ENCODE measurements at regions of chr3 and their contacts with region 1.

Region 1: GRCh38 chr3:32177702-32178198 is 60.7 kb upstream of the CMTM8 start:
- DNase-seq: peak; percentile 79
- H3K4me3 ChIP-seq: no peak overlapping the region
- H3K27ac ChIP-seq: no peak overlapping the region
- H3K4me1 ChIP-seq: peaks cover 7% of the 10 kb centered on the region
- H3K27me3 ChIP-seq: no peaks in the 10 kb centered on the region
- CTCF ChIP-seq: peak; percentile 99 to 100

Region 2: DNA sequence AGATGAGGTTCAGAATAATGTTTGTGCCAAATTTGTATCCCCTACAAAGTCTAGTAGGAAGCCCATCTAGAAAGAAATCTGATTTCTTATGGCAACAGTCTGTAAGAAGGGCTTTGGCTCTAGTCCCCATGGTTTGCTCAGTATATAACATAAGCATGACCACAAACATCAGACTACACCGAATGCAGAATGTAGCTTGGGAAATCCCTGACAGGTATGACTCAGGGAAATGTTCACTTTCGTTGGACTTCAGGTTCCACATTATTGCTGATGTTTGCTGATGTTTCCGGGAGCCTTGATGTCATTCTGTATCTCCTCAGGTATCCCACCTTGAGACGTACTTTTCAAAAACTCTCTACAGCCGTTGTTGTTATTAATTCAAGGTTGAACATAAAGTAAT is 1875.7 kb before region 1 on chr3:
- CTCF ChIA-PET with region 1: no interaction called
- dilution Hi-C with region 1: no loop called
- in situ Hi-C with region 1: no loop called
- intact Hi-C with region 1: no loop called
- DNase-seq: peak; percentile 88
- H3K4me3 ChIP-seq: no peak overlapping the region
- H3K27ac ChIP-seq: peak overlapping the region; percentile 19
- H3K4me1 ChIP-seq: peaks cover 11% of the 10 kb centered on the region
- H3K27me3 ChIP-seq: no peaks in the 10 kb centered on the region
- CTCF ChIP-seq: no peak

Region 3: DNA sequence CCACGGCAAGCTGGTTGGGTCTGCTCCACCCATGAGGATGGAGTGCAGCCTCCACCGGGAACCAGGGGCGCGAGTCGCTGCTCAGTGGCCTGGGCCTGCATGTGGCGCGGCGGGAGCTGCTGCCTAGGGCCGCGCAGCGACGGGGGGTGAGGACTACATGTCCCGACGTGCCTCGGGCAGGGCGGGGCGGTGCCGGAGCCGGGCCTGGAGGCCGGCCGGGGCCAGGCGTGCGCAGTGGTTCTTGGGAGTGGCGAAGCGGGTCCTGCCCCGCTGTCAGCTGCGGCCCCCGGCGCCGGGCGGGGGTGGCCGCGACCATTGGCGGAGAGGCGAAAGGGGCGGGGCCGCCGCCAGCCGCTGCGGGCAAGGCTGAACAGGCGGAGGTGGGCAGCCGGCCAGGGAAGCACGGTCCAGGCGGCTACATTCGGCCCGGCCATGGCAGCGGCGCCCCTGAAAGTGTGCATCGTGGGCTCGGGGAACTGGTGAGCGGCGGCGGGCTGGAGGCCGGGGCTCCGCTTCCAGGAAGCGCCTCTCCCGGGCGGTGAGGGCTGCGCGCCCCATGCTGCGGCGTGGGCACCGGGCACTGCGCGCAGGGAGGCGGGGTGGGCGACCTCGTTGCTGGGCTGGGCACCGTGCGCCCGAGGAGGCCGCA is 71.3 kb before region 1 on chr3 and contains the start of gene GPD1L:
- CTCF ChIA-PET with region 1: no interaction called
- dilution Hi-C with region 1: loop called (anchors 10 kb)
- in situ Hi-C with region 1: no loop called
- intact Hi-C with region 1: no loop called
- DNase-seq: peak; percentile 94
- H3K4me3 ChIP-seq: peak within 1 kb of the TSS; percentile 53 to 90 (median 62)
- H3K27ac ChIP-seq: no peak within 1 kb of the TSS
- H3K4me1 ChIP-seq: peaks cover 16% of the 10 kb centered on the region
- H3K27me3 ChIP-seq: no peaks in the 10 kb centered on the region
- CTCF ChIP-seq: no peak
- total RNA-seq, gene GPD1L: 5.7 to 7.5 TPM

Region 4: DNA sequence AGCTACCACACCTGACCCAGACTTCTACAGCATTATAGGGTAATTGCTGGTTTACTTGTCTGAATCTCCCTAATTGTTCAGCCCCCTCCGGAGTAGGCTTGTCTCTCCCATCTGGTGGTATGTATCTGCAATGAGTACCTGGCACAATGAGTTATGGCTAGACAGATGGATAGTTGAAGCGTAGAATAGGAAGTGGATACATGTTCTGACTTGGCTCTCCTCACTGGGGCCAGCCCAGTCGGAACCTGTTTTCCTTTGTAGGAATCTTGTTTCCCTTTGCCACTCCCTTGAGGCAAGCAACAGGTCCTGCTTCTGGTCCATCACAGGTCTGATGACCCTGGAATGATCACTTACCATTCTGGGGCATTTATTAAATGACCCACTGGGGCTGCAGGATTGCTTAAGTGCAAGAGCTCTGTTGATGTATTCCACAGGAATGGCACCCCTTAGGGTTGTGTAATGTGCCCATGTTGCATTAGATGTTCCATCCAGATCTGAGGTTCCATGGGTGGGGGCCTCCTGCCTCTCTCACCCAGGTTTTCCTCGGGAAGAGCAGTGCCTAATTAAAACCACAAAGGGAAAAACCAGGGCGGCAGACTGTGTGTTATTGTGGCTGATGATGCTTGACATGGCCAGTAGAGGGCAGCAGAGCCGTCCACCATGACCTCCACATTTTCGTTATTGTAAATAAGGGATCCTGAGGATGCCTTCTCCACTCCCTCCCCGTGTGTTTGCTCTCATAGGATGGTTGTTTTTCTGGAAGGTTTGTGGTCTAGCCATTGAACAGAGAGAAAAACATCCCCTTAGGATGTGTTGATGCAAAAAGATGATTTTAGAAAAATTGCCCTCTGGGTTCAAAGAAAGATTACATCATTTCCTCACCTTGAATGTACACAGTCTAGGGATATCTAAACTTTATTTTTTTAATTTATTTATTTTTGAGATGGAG is 118.8 kb after region 1 on chr3:
- CTCF ChIA-PET with region 1: interaction called, 7 read pairs
- dilution Hi-C with region 1: no loop called
- in situ Hi-C with region 1: no loop called
- intact Hi-C with region 1: loop called (anchors 1 kb)
- DNase-seq: peak; percentile 75
- H3K4me3 ChIP-seq: no peak overlapping the region
- H3K27ac ChIP-seq: no peak overlapping the region
- H3K4me1 ChIP-seq: peaks cover 14% of the 10 kb centered on the region
- H3K27me3 ChIP-seq: no peaks in the 10 kb centered on the region
- CTCF ChIP-seq: peak; percentile 85 to 95

Region 5: GRCh38 chr3:32340039-32340438 is 162.3 kb after region 1 on chr3:
- CTCF ChIA-PET with region 1: no interaction called
- dilution Hi-C with region 1: no loop called
- in situ Hi-C with region 1: loop called in 1 of 2 experiments (anchors 5 kb)
- intact Hi-C with region 1: loop called (anchors 1 kb)
- DNase-seq: peak; percentile 30
- H3K4me3 ChIP-seq: no peak overlapping the region
- H3K27ac ChIP-seq: no peak overlapping the region
- H3K4me1 ChIP-seq: no peaks in the 10 kb centered on the region
- H3K27me3 ChIP-seq: no peaks in the 10 kb centered on the region
- CTCF ChIP-seq: peak; percentile 54 to 63

Region 6: GRCh38 chr3:32401556-32402081 is 223.9 kb after region 1 on chr3:
- CTCF ChIA-PET with region 1: no interaction called
- dilution Hi-C with region 1: no loop called
- in situ Hi-C with region 1: no loop called
- intact Hi-C with region 1: loop called (anchors 2 kb)
- DNase-seq: peak; percentile 71
- H3K4me3 ChIP-seq: peak overlapping the region; percentile 37 to 45 (median 40)
- H3K27ac ChIP-seq: peak overlapping the region; percentile 66
- H3K4me1 ChIP-seq: peaks cover 61% of the 10 kb centered on the region
- H3K27me3 ChIP-seq: no peaks in the 10 kb centered on the region
- CTCF ChIP-seq: no peak

Region 7: DNA sequence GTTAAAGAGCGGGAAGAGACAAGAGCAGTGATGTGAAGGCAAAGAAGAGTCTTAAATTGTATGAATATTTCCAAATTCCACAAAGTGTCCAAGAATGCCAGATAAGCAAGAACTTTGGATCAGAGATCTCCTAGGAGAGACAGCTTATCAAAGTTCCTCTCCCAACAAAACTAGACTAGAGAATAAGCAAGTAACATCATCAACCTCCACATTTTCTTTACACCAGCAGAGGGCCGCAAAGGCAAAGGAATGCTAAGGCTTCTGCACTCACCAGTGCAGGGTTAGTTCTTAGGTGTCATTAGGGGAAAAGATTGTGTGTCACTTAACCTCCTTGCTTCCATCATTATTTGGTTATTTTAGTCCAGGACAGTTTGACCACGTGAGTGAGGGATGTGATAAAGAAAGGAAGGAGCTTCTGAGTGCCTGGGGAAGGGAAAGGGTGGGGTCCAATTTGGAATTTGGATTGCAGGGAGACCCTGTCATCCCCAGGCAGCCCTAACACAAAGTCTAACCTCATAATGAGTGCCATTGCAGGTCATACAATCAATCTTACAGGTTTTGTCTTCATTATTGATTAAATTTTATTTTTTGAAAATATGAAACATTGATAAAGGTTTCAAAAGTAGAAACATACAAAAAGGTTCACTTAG is 332.4 kb after region 1 on chr3:
- CTCF ChIA-PET with region 1: no interaction called
- dilution Hi-C with region 1: no loop called
- in situ Hi-C with region 1: no loop called
- intact Hi-C with region 1: loop called (anchors 2 kb)
- DNase-seq: peak; percentile 52
- H3K4me3 ChIP-seq: no peak overlapping the region
- H3K27ac ChIP-seq: no peak overlapping the region
- H3K4me1 ChIP-seq: no peaks in the 10 kb centered on the region
- H3K27me3 ChIP-seq: no peaks in the 10 kb centered on the region
- CTCF ChIP-seq: peak; percentile 63 to 79

Region 8: DNA sequence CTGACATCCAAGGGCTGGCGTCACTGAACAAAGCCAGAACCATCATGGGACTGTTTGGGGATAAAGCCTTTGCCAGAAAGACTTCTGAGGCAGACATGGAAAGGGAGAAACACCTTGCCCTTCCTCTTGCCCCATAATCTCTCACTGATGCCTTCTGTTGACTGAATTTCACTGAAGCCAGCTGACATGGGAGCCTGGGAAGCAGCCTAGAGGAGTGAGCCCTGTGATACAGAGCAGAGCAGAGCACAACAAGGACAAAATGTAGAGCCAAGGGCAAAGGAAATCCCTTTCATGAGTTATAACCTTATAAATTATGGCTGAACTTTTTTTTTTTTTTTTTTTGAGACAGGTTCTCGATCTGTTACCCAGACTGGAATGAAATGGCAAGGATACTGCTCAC is 497.4 kb after region 1 on chr3:
- CTCF ChIA-PET with region 1: no interaction called
- dilution Hi-C with region 1: loop called (anchors 5 kb)
- in situ Hi-C with region 1: loop called in 1 of 2 experiments (anchors 25 kb)
- intact Hi-C with region 1: no loop called
- DNase-seq: no peak
- H3K4me3 ChIP-seq: no peak overlapping the region
- H3K27ac ChIP-seq: no peak overlapping the region
- H3K4me1 ChIP-seq: no peaks in the 10 kb centered on the region
- H3K27me3 ChIP-seq: peaks cover 2% of the 10 kb centered on the region
- CTCF ChIP-seq: no peak

Measured in mammary epithelial cell (primary cell).